ENCODE measurements at regions of chr12 and their contacts with region 1.

Region 1: GRCh38 chr12:3777206-3777809 is 24.4 kb upstream of the CRACR2A start:
- DNase-seq: peak in 6 of 9 donors; percentile 26 to 46 (median 33)
- ATAC-seq: peak; percentile 52
- H3K4me3 ChIP-seq: no peak overlapping the region
- H3K4me3 Mint-ChIP-seq: no peak overlapping the region
- H3K27ac ChIP-seq: no peak overlapping the region
- H3K27ac Mint-ChIP-seq: no peak overlapping the region
- H3K4me1 ChIP-seq: no peaks in the 10 kb centered on the region
- H3K4me1 Mint-ChIP-seq: peaks cover 3 to 10% (median 5%) of the 10 kb centered on the region in 7 donors
- H3K27me3 ChIP-seq: no peaks in the 10 kb centered on the region
- H3K27me3 Mint-ChIP-seq: peaks cover 0 to 4% (median 0%) of the 10 kb centered on the region in 5 donors

Region 2: DNA sequence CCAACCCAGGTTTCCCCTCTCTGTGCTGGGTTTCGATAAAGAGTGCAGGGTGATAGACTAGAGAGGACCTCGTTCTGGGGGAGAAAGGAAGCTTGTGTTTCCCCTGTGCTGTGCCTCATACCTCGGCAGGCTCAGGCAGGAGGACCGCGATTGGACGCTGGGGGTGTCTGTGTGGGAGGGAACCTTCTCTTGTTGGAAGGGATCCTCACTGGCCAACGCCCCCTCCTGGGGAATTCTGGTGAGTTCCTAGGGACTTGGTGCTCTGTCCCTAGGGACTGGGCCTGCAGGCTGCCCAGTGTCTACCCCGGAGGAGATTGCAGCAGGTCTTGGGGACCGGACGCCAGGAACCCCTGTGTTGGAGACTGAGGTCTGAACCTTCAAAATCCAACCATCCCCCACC is 443.7 kb before region 1 on chr12:
- CTCF ChIA-PET with region 1: interaction called, 10 read pairs
- POLR2A ChIA-PET with region 1: no interaction called
- intact Hi-C with region 1: no loop called
- DNase-seq: no peak
- ATAC-seq: no peak
- H3K4me3 ChIP-seq: no peak overlapping the region
- H3K4me3 Mint-ChIP-seq: no peak overlapping the region
- H3K27ac ChIP-seq: no peak overlapping the region
- H3K27ac Mint-ChIP-seq: no peak overlapping the region
- H3K4me1 ChIP-seq: no peaks in the 10 kb centered on the region
- H3K4me1 Mint-ChIP-seq: peaks cover 0 to 2% (median 0%) of the 10 kb centered on the region in 7 donors
- H3K27me3 ChIP-seq: no peaks in the 10 kb centered on the region
- H3K27me3 Mint-ChIP-seq: peaks cover 2 to 14% (median 11%) of the 10 kb centered on the region in 5 donors

Region 3: DNA sequence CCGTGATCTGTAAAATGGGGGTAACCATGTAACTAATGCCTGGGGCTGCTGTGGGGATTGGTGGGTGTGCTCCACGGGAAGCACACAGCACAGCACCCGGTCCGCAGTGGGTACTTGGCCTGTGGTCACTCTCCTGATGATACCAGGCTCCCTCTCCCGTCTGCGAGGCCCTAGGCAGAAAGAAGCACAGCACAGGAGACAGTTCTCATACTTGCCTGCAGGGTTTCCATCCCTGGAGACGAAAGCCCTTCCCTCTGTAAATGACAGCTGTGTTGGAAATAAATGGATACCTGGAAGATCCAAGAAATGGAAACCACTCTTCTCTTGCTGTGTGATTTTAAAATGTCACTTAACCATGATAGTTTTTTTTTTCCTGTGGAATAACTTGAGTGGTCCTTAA is 294.2 kb before region 1 on chr12:
- CTCF ChIA-PET with region 1: no interaction called
- POLR2A ChIA-PET with region 1: no interaction called
- intact Hi-C with region 1: no loop called
- DNase-seq: no peak
- ATAC-seq: no peak
- H3K4me3 ChIP-seq: no peak overlapping the region
- H3K4me3 Mint-ChIP-seq: no peak overlapping the region
- H3K27ac ChIP-seq: no peak overlapping the region
- H3K27ac Mint-ChIP-seq: no peak overlapping the region
- H3K4me1 ChIP-seq: no peaks in the 10 kb centered on the region
- H3K4me1 Mint-ChIP-seq: no peaks in the 10 kb centered on the region
- H3K27me3 ChIP-seq: no peaks in the 10 kb centered on the region
- H3K27me3 Mint-ChIP-seq: peaks cover 14 to 69% (median 52%) of the 10 kb centered on the region in 5 donors